ENCODE measurements at regions of chr21 and their contacts with region 1.

Region 1: GRCh38 chr21:43775795-43776430 is at the start of gene CSTB:
- DNase-seq: peak; percentile 80 to 98 (median 90)

Region 2: GRCh38 chr21:42799516-42799915 is 976.4 kb before region 1 on chr21:
- intact Hi-C with region 1: no loop called
- DNase-seq: no peak

Region 3: DNA sequence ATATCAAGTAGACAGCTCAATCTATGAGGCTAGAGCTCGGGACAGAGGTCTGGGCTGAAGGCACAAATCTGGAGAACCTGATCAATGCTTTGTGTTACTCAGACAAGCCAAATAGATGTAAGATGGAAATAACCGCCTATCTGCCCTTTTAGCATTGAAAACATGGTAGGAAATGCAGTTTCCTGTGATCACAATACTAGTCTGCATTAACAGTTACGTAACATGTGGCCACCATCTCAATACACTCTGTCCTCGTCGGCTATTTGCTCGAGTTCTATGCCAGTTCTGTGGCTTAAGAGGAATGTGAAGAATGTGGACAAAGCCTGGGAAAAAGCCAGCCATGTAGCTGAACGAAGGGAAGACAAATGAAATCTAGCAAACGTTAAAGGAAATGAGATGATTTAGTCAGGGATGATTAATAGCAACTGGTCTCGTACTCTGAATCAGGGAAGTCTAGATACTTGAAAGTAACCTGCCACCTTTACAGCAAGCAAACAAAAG is 189.9 kb before region 1 on chr21:
- intact Hi-C with region 1: no loop called
- DNase-seq: no peak

Region 4: GRCh38 chr21:43667191-43667904 is 108.6 kb before region 1 on chr21:
- intact Hi-C with region 1: loop called (anchors 5 kb)
- DNase-seq: no peak

Region 5: DNA sequence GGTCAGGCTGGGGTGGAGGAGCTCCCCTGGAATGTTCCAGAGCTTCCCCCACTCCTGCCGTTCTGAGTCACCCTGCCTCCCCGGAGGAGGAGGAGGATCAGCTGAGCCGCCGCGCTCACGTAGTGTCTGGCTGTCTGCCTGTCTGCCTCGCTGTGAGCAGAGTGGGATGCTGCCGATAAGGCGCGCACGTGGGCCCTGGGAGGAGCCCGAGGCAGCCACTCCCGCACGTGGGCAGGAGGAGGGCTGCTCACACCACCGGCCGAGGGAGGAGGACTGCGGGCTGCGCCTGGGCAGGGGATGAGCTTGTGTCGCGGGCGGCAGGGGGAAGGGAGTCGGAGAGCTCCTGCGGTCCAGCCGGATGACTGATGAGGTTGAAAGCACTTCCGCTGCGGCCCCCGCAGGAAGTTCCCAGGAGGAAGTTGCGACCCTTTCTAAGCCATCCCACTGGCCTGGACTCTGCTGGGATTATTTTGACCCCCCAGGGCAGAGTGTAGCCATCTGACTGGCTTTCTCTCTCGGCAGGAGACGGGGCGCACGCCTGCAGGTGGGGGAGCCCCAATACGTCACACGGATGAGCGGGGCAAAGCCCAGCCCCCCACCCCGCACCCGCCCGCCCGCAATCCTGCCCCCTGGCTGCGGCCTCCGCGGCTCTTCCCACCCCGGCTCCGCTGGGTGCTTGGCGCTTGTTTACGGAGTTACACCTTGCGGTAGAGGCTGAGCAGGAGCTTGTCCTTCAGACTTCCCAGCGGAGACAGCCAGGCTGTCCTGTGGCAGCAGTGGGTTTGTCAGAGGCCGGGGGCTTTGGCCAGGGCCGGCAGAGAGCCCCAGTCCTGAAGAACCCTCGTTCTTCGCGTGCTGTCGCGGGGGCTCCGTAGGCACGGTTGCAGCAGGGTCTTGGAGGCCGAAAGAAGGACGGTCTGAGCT is 47.2 kb before region 1 on chr21:
- intact Hi-C with region 1: loop called (anchors 5 kb)
- DNase-seq: peak; percentile 85 to 99 (median 93)

Region 6: DNA sequence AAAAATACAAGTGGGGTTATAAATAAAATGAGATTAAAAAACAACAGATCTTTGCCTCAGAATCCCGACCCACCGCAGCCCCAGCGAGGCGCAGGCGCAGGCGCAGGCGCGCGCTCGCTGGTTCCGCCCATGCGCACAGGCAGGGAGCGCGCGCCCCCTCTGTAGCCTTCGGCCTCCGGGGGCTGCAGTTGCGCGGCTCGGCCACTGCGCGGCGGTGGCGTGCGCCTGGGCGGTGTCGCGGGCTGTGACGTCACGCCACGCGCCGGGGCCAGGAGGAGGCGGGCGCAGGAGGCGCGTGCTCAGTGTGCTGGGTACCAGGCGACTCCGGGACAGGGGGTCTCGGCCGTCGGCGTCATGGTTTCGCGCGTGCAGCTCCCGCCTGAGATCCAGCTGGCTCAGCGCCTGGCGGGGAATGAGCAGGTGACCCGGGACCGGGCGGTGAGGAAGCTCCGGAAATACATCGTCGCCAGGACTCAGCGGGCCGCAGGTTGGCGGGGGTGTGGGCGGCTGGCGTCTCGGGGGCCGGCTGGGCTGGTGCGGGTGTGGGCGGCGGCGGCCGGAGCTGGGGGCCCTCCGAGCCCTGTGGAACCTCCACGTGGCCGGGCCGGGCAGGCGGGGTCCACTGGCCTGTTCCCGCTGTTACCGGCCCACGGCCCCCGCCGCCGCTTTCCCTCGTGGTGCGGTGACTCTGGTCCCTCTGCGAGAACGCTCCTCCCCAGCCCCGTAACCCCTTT is 13.5 kb after region 1 on chr21 and contains the start of gene RRP1:
- intact Hi-C with region 1: loop called (anchors 1 kb)
- DNase-seq: peak; percentile 81 to 98 (median 88)